Esophagus muscularis mucosa (tissue), 4 donors: ENCODE measurements at regions of chr1 and their contacts with region 1.

Region 1: DNA sequence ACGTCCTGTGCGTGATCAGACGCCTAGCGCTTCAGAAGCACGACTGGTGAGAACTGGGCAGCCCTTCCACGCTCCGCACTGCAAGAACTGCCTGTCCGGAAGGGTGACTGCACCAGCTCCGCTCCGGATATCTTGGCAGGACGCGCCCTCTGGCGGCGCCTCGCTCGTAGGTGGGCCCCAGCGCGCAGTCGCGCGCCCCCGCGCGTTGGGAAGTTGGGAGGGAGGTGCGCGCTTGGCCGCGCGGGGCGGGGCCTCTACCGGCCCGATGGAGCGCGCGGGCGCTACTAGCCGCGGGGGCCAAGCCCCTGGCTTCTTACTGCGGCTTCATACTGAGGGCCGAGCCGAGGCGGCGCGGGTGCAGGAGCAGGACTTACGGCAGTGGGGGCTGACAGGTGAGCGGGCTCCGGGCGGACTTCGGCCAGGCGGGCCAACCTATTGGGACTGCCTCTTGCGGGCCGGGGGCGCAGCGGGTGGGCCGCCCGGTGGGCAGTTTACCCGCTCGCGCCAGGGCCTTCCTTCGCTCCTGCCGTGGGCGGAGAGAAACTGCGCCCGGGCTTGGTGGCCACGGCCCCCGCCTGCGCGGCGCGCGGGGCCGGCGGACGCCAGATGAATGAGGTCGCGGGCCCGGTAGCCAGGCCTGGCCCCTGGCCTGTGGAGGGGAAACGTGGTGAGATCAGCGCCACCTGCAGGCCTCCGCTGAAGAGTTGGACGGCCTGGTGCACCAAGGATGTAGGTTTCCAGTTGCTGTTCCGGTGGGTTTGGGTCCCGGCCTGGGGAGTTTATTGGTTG is at the start of gene CHD1L:
- DNase-seq: peak; percentile 98
- H3K4me3 ChIP-seq: peak within 1 kb of the TSS; percentile 79 to 98 (median 84)
- H3K27ac ChIP-seq: peak within 1 kb of the TSS; percentile 92 to 98 (median 93)
- H3K4me1 ChIP-seq: peaks cover 6 to 28% (median 19%) of the 10 kb centered on the region in 4 donors
- H3K27me3 ChIP-seq: no peaks in the 10 kb centered on the region
- CTCF ChIP-seq: peak; percentile 74 to 86 (median 80)
- EP300 ChIP-seq: no peak
- POLR2A ChIP-seq: no peak
- total RNA-seq, gene CHD1L: 13.9 to 18.8 (median 18.2) TPM

Region 2: GRCh38 chr1:147084273-147085096 is 158.1 kb before region 1 on chr1:
- intact Hi-C with region 1: loop called (anchors 5 kb)
- DNase-seq: peak; percentile 66
- H3K4me3 ChIP-seq: peak overlapping the region; percentile 53 to 54 (median 54)
- H3K27ac ChIP-seq: peak overlapping the region in 2 of 4 donors; percentile 28 to 32
- H3K4me1 ChIP-seq: peaks cover 22 to 36% (median 32%) of the 10 kb centered on the region in 4 donors
- H3K27me3 ChIP-seq: peaks cover 0 to 58% (median 39%) of the 10 kb centered on the region in 4 donors
- CTCF ChIP-seq: no peak
- EP300 ChIP-seq: no peak
- POLR2A ChIP-seq: no peak

Region 3: DNA sequence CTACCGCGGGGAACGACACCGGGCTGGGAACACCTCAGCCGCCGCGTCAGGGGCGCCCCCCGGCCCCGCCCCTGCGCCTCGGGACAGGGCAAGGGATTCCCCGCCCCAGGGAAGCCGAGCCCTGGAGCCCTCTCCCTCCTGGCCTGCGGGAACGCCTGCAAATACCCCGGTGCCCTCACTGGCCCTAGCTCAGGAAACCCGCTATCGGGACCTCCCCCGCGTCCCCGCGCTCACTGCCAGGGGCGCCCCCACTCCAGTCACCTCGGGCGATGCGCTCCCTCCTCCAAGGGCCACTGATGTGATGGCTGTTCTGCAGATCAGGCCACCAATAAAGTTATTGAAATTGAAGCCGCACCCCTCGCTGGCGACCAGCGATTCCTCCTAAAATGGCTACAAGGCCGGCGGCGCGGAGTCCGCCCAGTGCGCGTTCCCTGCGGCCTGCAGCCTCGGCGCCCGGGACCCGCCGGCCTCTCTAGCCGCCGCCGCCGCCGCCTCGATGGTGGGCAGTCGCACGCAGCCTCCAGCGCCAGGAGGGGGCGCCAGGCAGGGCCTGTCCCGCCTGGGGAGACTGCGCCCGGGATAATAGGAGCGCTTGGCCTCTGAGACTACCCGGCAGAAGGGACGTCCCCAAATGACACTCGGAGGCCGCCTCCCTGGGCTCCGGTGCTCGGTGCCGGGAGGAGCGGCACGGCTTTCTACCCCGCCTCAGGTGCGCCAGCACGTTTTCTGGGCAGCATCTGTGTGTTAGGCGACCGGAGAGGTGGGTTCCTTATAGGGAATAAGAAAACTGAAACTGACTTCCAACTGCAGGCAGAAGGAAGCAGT is 70.3 kb before region 1 on chr1 and contains the start of gene PRKAB2:
- intact Hi-C with region 1: loop called (anchors 1 kb)
- DNase-seq: peak; percentile 97
- H3K4me3 ChIP-seq: peak within 1 kb of the TSS; percentile 86 to 97 (median 92)
- H3K27ac ChIP-seq: peak within 1 kb of the TSS; percentile 93 to 95 (median 94)
- H3K4me1 ChIP-seq: peaks cover 30 to 57% (median 51%) of the 10 kb centered on the region in 4 donors
- H3K27me3 ChIP-seq: no peaks in the 10 kb centered on the region
- CTCF ChIP-seq: peak; percentile 86 to 96 (median 87)
- EP300 ChIP-seq: no peak
- POLR2A ChIP-seq: peak; percentile 44
- total RNA-seq, gene PRKAB2: 21.5 to 45.4 (median 30.3) TPM